ENCODE measurements at regions of chr4 and their contacts with region 1.

Region 1: DNA sequence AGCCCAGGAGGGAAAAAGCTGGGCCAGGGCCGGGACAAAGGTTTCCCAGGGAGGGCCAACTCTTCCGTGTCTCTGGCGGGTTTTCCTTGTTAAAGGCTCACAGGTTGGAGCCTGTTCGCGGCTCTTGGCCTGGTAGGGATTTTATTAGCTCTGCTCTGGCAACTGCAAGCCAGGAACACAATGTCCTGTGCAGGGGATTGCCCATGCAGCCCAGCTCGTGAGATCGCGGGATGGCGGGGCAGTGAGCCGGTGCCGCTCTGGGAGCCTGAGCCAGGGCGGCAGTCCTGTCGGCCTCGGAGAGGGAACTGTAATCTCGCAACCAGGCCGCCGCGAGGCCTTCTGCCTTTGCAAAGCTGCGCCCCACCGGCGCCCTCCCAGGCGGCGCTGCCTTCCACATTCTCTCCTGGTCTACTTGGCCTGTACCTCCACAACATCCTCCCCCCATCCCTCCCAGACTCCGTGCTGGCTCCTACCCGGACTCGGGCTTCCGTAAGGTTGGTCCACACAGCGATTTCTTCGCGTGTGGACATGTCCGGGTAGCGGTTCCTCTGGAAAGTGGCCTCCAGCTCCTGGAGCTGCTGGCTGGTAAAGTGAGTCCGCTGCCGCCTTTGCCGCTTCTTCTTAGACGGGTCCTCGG is 2.1 kb downstream of the PITX2 start:
- DNase-seq: no peak
- H3K4me3 Mint-ChIP-seq: no peak overlapping the region
- H3K27ac Mint-ChIP-seq: no peak overlapping the region
- H3K4me1 Mint-ChIP-seq: peaks cover 8% of the 10 kb centered on the region
- H3K27me3 Mint-ChIP-seq: peaks cover 95% of the 10 kb centered on the region

Region 2: DNA sequence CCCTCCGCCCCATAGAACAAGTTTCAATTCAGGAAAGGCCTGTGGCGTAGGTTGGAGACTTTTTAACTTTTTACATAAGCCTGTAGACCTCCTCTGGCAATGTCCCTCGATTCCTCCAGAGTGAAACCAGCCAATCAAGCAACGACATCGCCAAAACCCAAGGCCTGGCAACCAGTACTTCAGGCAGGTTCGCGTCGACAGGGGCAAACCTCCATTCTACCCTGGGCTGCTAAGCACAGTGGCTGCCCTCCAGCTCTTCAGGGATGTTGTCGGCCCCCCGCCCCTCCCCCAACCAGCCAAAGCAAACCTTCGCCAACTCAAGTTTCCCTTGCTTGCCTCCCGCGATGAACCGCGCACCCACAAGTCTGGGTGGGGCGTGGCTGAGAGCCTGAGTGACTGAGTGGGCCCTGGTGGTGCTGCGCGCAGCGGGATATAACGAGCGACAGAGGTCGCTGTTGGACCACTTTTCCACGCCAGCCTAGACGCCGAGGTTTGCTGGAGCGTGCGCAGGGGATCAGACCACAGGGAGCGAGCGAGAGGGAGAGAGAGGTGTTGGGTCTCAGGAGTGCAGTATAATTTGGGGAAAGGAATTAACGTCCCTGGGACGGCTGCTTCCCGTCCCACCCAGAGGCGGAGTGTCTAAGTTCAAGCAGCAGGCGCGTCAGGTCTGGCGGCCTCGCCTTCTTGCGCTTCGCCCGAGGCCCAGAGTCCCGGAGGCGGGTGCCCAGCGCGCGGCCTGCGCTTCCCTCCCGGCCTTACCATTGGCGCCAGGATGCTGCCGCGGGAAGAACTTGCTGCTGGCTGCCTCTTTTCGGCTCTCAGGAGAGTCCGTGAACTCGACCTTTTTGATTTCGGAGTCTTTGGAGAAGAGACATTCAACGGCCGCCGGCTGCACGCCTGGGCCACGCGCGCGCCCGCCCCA is 11.0 kb after region 1 on chr4:
- intact Hi-C with region 1: loop called (anchors 1 kb)
- DNase-seq: no peak
- H3K4me3 Mint-ChIP-seq: peak overlapping the region; percentile 14
- H3K27ac Mint-ChIP-seq: peak overlapping the region; percentile 38
- H3K4me1 Mint-ChIP-seq: peaks cover 7% of the 10 kb centered on the region
- H3K27me3 Mint-ChIP-seq: peaks cover 81% of the 10 kb centered on the region

Region 3: DNA sequence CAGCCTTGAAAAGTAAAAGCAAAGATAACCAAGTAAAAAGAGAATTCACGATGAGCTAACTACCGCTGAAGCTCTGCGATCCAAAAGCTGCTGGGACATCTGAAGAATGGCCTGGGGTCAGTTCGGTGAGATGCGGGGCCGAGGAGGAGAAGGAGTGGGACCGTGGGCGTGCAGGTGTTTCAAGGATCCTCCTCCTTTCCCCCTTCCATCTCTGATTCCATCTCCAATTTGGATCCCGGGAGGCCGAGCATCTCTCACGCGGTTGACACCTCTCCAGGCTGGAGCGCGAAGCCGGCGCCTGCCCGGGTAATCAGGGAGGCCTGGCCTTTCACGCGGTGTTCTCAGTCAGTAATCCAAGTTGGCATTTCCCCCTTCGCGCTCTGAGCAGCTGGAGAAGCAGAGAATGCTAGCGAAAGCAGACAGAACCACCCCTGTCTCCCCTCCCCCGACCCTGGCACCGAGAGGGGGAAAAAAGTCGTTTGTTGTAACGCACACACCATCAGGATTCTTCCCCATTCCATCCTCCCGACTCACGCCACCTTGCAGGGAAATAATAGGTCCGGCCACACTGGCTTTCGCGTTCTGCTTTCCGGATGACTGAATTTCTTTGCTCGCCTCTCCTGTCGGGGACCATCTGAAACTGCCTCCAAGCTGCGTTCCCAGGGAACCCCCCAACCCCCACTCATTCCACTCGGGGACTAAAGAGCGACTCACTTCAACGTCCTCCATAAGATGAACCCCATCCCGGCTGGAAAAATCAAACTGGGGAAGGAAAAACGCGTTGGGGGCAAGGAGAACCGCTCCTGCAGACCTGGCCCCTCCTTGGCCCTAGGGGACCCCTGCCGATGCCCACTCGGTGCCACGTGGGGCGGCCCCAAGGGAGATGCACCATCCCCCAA is 1888.7 kb after region 1 on chr4:
- intact Hi-C with region 1: loop called (anchors 2 kb)
- DNase-seq: no peak
- H3K4me3 Mint-ChIP-seq: peak overlapping the region; percentile 41
- H3K27ac Mint-ChIP-seq: no peak overlapping the region
- H3K4me1 Mint-ChIP-seq: peaks cover 26% of the 10 kb centered on the region
- H3K27me3 Mint-ChIP-seq: peaks cover 81% of the 10 kb centered on the region